HEK293 (cell line): ENCODE measurements at regions of chr5 and their contacts with region 1.

Region 1: DNA sequence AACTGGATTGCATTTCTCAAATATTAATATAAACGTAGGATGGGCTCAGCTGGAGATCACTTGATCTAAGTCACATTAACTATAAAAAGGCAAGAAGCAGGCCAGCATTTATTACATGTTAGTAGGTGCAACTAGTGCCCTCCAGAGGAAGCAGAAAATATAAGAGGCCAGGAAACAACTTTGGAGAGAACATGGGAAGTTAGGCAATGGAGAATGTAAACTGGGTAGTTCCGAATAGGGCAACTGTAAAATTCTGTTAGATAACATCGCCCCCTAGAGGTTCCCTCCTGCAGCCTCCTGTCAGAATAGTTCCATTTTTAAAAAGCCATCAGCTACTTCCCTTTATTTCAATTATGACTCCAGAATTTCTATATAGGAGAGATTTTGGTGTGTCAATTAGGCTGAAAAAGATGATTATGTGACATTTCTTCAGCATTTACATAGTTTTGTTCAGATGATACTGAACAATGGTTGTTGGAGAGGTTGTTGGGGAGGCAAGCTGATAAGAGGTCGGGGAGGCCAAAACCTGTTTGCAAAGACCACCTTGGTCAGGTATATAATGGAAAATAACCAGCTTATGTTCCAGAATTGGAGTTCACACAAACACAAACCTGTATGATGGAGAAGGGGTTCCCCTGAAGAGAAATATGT is 22.4 kb downstream of the CCL28 start:
- H3K4me3 ChIP-seq: no peak overlapping the region
- H3K27ac ChIP-seq: no peak overlapping the region
- H3K4me1 ChIP-seq: no peaks in the 10 kb centered on the region
- CTCF ChIP-seq: peak; percentile 86

Region 2: DNA sequence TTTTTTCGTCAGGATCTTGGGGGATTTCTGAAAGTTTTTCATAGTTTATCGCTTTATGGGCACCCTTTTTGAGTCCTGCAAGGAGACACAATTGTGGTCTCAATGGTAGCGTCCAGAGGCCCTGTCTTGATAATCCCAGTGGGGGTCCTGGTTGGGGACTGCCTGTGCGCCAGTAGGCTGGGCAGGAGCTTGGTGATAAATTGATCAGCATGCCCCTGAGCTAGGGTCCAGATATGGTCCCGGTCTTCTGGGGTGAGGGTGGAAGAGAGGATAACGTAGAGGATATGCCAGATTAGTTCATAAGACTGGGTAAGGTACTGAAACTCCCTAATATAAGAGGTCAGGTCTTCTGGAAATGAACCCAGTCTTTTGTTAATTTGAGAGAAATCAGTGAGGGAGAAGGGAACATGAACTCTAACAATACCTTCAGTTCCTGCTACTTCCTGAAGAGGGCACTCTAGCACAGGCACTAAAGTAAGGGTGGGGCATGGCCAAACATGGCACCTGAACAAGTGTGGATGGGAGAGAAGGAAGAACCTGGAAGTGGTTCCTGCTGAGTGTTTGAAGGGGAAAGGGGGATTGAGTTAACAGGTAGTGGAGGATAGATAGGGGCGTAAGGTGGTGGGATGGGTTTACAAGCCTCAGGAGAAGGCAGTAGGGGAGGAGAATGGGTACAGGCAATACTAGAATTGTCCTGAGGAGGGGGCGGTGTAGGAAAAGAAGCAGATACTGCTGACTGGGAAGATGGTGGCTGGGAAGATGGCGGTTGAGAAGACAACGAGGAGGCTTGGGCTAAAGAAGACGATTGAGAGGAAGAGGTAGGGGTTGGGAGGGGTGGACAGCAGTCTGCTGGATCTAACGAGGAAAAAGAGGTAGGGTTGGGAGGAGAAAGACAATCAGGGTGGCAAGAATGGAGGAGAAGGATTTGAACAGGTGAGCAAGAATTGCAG is 315.9 kb before region 1 on chr5:
- CTCF ChIA-PET with region 1: interaction called, 16 read pairs
- POLR2A ChIA-PET with region 1: no interaction called
- H3K4me3 ChIP-seq: no peak overlapping the region
- H3K27ac ChIP-seq: no peak overlapping the region
- H3K4me1 ChIP-seq: no peaks in the 10 kb centered on the region
- CTCF ChIP-seq: peak; percentile 57

Region 3: DNA sequence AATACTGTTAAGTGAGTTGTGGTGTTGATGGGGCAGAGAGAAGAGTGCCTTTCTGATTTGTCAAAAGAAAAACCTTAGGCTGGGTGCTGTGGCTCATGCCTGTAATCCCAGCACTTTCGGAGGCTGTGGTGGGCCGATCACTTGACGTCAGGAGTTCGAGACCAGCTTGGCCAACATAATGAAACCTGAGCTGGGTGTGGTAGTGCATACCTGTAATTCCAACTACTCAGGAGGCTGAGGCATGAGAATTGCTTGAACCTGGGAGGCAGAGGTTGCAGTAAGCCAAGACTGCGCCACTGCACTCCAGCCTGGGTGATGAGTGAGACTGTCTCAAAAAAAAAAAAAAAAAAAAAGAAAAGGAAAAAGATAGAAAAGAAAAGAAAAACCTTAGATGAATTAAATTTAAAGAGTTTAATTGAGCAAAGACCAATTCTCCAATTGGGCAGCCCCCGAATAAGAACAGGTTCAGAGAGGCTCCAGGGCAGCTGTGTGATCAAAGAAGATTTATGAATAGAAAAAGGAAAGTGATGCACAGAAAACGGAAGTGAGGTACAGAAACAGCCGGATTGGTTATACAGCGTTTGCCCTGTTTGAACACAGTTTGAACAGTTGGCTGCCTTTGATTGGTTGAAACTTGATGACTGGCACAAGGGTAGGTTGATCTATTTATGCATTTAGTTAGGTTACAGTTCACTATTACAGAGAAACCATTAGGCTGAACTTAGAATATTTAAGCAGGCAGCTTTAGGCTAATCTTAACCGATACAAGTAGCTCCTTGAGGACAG is 168.5 kb before region 1 on chr5:
- CTCF ChIA-PET with region 1: interaction called, 36 read pairs
- POLR2A ChIA-PET with region 1: no interaction called
- H3K4me3 ChIP-seq: no peak overlapping the region
- H3K27ac ChIP-seq: no peak overlapping the region
- H3K4me1 ChIP-seq: no peaks in the 10 kb centered on the region
- CTCF ChIP-seq: no peak

Region 4: DNA sequence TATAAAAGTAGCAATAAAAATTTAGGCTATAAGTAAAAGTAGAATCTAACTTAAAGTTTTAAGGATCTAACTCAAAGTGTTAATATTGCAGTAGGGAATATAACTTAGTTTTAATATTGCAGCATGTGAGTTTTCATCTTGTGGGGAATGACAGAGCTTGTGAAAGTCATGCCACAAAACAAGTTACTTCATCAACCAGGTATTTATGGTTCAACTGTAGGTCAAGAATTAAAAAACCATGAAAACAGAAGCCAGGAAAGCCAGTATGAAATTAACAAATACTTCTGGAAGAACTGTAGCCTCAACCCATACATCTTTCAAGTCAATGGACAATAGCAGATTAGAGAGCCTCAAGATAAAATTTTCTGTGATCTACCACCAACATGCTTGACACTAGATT is 95.6 kb before region 1 on chr5:
- CTCF ChIA-PET with region 1: interaction called, 10 read pairs
- POLR2A ChIA-PET with region 1: no interaction called
- H3K4me3 ChIP-seq: no peak overlapping the region
- H3K27ac ChIP-seq: no peak overlapping the region
- H3K4me1 ChIP-seq: no peaks in the 10 kb centered on the region
- CTCF ChIP-seq: no peak

Region 5: DNA sequence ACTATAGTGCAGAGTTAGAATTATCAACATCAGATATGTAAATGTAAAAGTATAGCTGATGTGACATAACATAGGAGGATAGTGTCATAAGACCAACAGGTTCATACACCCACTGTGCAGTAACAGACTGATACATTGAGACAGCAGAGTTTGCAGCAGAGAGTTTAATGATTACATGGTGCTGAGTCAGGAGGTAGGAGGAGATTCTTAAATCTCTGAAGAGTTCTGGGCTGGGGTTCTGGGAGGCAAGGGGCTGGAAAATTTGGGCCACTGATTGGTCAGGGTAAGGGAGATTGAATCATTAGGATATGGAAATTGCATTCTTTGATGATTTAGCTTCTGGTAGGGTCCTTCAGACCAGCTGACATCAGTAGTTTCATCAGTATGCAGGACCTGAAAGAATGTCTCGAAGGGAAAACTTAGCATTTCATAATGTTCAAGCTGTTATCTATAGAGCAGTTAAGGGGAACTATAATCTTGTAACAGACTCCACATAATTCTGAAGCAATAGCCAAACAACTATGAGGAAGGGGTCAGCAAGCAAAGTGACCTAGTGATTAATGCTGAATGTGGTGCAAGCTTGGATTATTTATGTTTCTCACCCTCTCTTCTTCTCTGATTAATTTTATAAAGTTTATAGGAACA is 13.2 kb before region 1 on chr5:
- CTCF ChIA-PET with region 1: interaction called, 10 read pairs
- POLR2A ChIA-PET with region 1: no interaction called
- H3K4me3 ChIP-seq: no peak overlapping the region
- H3K27ac ChIP-seq: no peak overlapping the region
- H3K4me1 ChIP-seq: no peaks in the 10 kb centered on the region
- CTCF ChIP-seq: no peak

Region 6: GRCh38 chr5:43484106-43484849 is 94.5 kb after region 1 on chr5:
- CTCF ChIA-PET with region 1: interaction called, 59 read pairs
- POLR2A ChIA-PET with region 1: interaction called, 17 read pairs
- H3K4me3 ChIP-seq: peak overlapping the region; percentile 81
- H3K27ac ChIP-seq: peak overlapping the region; percentile 87
- H3K4me1 ChIP-seq: peaks cover 4% of the 10 kb centered on the region; the same call in 1 of the 2 replicates
- CTCF ChIP-seq: peak; percentile 91